OCI-LY7 (cell line): ENCODE measurements at regions of chr3 and their contacts with region 1.

Region 1: GRCh38 chr3:95197616-95198015 is 1134.8 kb downstream of the NSUN3 start:
- DNase-seq: no peak
- H3K4me3 ChIP-seq: no peak overlapping the region
- H3K27ac ChIP-seq: no peak overlapping the region
- H3K4me1 ChIP-seq: no peaks in the 10 kb centered on the region
- CTCF ChIP-seq: no peak

Region 2: DNA sequence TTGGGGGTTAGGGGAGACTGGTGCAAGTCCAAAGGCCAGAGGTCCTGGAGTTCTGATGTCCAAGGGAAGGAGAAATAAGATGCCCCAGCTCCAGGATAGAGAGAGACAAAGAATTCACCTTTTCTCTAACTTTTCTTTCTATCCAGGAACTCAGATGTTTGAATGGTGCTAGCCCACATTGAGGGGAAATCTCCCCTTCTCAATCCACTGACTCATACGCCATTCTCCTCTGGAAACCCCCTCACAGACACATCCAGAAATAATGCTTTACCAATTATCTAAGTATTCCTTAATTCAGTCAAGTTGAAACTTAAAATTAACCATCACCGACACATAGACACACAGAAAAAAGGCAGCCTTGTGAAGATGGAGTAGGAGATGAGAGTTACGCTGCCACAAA is 49.5 kb before region 1 on chr3:
- CTCF ChIA-PET with region 1: no interaction called
- POLR2A ChIA-PET with region 1: no interaction called
- intact Hi-C with region 1: loop called (anchors 10 kb)
- DNase-seq: no peak
- H3K4me3 ChIP-seq: no peak overlapping the region
- H3K27ac ChIP-seq: no peak overlapping the region
- H3K4me1 ChIP-seq: no peaks in the 10 kb centered on the region
- CTCF ChIP-seq: no peak

Region 3: DNA sequence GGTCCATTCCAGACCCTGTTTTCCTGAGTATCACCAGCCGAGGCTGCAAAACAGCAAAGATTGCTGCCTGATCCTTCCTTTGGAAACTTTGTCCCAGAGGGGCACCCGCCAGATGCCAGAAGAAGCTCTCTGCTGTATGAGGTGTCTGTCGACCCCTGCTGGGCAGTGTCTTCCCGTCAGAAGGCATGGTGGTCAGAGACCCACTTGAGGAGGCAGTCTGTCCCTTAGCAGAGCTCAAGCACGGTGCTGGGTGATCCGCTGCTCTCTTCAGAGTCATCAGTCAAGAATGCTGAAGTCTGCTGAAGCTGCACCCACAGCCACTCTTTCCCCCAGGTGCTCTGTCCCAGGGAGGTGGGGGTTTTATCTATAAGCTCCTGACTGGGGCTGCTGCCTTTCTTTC is 13.6 kb before region 1 on chr3:
- CTCF ChIA-PET with region 1: no interaction called
- POLR2A ChIA-PET with region 1: no interaction called
- intact Hi-C with region 1: loop called (anchors 1 kb)
- DNase-seq: no peak
- H3K4me3 ChIP-seq: no peak overlapping the region
- H3K27ac ChIP-seq: no peak overlapping the region
- H3K4me1 ChIP-seq: no peaks in the 10 kb centered on the region
- CTCF ChIP-seq: no peak